Calu3 (cell line): ENCODE measurements at regions of chr6 and their contacts with region 1.

Region 1: DNA sequence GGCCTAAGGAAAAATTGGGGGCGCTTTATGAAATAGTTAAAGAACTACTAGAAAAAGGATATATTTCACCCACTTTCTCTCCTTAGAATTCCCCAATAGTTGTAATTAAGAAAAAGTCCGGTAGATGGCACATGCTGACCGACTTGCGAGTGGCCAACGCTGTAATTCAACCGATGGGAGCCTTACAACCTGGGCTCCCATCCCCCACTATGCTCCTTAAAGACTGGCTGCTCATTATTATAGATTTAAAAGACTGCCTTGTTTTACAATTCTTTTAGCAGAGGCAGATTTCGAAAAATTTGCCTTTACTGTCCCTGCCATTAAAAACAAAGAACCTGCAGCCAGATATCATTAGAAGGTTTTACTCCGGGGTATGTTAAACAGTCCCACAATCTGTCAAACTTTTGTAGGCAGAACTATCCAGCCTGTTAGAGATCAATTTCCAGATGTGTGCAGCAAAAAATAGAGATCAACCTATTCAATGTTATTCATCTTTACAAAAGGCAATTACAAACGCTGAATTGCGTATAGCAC is 58.5 kb upstream of the PRSS16 start:
- DNase-seq: peak; percentile 79
- H3K4me3 Mint-ChIP-seq: peak overlapping the region; percentile 78
- H3K27ac Mint-ChIP-seq: peak overlapping the region; percentile 55
- H3K4me1 Mint-ChIP-seq: peaks cover 9% of the 10 kb centered on the region
- H3K27me3 Mint-ChIP-seq: no peaks in the 10 kb centered on the region
- CTCF ChIP-seq: peak; percentile 71

Region 2: GRCh38 chr6:27295301-27296081 is 106.5 kb after region 1 on chr6:
- CTCF ChIA-PET with region 1: interaction called, 4 read pairs
- intact Hi-C with region 1: loop called (anchors 5 kb)
- DNase-seq: peak; percentile 69
- H3K4me3 Mint-ChIP-seq: peak overlapping the region; percentile 89
- H3K27ac Mint-ChIP-seq: peak overlapping the region; percentile 76
- H3K4me1 Mint-ChIP-seq: peaks cover 29% of the 10 kb centered on the region
- H3K27me3 Mint-ChIP-seq: no peaks in the 10 kb centered on the region
- CTCF ChIP-seq: no peak

Region 3: DNA sequence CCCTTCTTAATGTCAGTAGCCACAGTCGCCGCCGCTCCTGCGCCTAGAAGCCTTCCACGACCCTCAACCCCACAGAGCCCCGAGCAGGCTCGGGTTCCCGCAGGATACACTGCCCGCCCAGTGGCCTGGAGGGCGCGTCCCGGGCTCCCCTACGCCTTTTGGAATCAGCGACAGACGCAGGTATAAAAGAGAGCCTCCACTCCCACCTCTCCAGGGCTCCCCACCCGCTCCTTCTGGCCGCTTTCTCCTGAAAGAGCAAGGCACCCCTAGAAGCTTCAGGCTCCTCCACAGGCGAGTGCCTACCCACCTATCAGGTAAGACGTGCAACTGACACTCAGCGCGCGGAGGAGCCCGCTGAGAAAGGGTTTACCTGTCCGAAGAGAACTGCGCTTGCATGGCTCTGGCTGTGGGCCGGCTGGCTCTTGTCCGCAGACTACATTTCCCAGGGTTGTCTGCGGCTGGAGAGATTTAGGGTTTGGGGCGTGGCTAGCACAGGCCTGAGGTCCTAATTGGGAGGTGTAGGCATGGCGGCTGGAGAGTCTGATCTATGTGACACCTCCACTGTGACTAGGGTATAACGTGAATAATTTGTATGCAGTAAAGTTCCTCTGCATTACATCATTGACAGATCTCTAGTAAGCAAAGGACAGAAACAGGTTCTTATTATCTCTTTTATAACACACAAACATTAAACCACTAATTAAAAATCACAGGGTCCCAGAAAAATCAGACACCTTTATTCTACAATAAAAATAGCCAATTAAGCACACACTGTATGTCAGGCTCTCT is 186.1 kb after region 1 on chr6:
- CTCF ChIA-PET with region 1: no interaction called
- intact Hi-C with region 1: loop called (anchors 10 kb)
- DNase-seq: peak; percentile 86
- H3K4me3 Mint-ChIP-seq: peak overlapping the region; percentile 85
- H3K27ac Mint-ChIP-seq: peak overlapping the region; percentile 51
- H3K4me1 Mint-ChIP-seq: peaks cover 11% of the 10 kb centered on the region
- H3K27me3 Mint-ChIP-seq: no peaks in the 10 kb centered on the region
- CTCF ChIP-seq: no peak

Region 4: DNA sequence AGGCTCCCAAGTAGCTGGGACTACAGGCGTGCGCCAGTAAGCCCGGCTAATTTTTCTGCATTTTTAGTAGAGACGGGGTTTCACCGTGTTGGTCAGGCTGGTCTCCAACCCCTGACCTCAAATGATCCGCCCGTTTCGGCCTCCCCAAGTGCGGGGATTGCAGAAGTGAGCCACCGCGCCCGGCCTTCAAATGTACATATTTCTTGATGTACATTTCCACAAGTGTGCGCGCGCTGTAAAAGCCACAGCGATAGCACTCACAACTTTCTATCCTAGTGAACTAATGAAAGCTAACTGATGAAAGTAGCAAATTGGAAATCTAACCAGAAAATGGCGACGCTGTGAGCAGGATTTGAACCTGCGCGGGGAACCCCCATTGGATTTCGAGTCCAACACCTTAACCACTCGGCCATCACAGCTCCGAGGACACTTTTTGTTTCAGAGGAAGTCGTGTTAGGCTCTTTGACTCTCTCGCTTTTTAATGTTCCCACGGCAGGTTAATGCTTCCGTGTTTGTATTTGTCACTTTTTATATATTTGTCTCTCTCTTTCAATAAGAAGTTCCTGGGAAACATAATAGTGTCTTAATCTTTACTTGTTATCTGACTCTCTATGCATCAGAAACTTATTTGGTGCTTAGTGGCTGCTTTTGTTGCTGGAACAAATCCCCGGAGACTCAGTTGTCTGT is 483.3 kb after region 1 on chr6:
- CTCF ChIA-PET with region 1: no interaction called
- intact Hi-C with region 1: loop called (anchors 5 kb)
- DNase-seq: peak; percentile 85
- H3K4me3 Mint-ChIP-seq: peak overlapping the region; percentile 60
- H3K27ac Mint-ChIP-seq: peak overlapping the region; percentile 78
- H3K4me1 Mint-ChIP-seq: peaks cover 36% of the 10 kb centered on the region
- H3K27me3 Mint-ChIP-seq: no peaks in the 10 kb centered on the region
- CTCF ChIP-seq: no peak